Activated CD4-positive, alpha-beta T cell treated with anti-CD3 and anti-CD28 coated beads, Interleukin-2, amount 10 ng/mL, durations not matched to agents 7 days and 5 days (primary cell): ENCODE measurements at regions of chr2 and their contacts with region 1.

Region 1: DNA sequence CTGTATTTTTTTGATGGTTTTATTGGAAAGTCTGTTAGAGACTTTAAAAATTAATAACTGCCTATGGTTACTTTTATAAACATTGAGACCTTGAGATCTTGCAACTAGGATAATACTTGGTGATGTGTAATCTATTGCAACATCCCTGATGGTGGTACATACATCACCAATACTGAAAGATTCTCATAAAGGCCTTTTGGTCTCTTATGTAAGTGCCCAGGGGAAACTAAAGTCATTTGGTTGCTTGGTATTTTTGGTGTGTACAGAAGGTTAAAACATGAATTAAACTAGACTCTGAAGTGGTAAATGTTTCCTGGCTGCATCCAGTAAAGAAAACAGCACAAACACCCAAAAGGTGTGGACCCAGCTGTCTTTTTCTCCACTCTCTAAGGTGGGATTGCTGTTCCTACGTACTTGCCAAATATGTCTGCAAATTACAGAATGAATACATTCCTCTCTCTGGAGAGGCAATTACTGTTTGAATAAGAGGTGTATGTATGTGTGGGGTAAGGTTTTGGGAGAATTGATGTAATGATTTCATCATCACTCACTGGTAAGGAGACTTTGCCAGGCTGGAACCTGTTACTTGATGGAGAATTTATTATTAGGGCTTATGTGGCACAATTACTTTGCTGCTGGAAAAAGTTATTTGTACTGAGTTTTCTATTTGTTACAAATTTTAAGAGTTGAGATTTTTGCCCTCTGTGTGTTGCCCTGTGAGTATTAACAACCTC is 3.6 kb downstream of the B3GNT2 start:
- DNase-seq: no peak
- H3K4me3 Mint-ChIP-seq: peak overlapping the region; percentile 89
- H3K27ac Mint-ChIP-seq: peak overlapping the region; percentile 97
- H3K4me1 Mint-ChIP-seq: peaks cover 64% of the 10 kb centered on the region
- H3K27me3 Mint-ChIP-seq: no peaks in the 10 kb centered on the region

Region 2: GRCh38 chr2:61816480-61817355 is 382.8 kb before region 1 on chr2:
- CTCF ChIA-PET with region 1: no interaction called
- POLR2A ChIA-PET with region 1: no interaction called
- DNase-seq: no peak
- H3K4me3 Mint-ChIP-seq: no peak overlapping the region
- H3K27ac Mint-ChIP-seq: no peak overlapping the region
- H3K4me1 Mint-ChIP-seq: no peaks in the 10 kb centered on the region
- H3K27me3 Mint-ChIP-seq: peaks cover 15% of the 10 kb centered on the region

Region 3: DNA sequence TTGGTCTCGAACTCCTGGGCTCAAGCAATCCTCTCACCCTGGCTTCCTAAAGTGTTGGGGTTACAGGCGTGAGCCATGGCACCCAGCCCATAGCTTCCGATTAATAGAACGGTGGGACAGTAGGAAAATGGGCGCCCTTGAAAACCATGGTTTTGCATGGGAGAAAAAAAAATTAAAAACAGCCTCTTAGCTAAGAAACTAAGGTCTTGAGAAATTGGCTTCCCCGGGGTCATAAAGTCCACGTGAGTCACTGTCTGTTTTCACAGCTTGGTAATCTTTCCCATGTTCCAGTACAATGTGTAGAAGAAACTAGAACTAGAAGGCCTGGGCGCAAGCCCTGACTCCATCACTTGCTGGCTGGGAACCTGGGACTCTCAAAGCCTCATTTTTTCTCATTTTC is 17.1 kb after region 1 on chr2:
- CTCF ChIA-PET with region 1: interaction called, 14 read pairs
- POLR2A ChIA-PET with region 1: no interaction called
- DNase-seq: no peak
- H3K4me3 Mint-ChIP-seq: no peak overlapping the region
- H3K27ac Mint-ChIP-seq: peak overlapping the region; percentile 4
- H3K4me1 Mint-ChIP-seq: peaks cover 50% of the 10 kb centered on the region
- H3K27me3 Mint-ChIP-seq: no peaks in the 10 kb centered on the region